ENCODE measurements at regions of chr19 and their contacts with region 1.

Region 1: DNA sequence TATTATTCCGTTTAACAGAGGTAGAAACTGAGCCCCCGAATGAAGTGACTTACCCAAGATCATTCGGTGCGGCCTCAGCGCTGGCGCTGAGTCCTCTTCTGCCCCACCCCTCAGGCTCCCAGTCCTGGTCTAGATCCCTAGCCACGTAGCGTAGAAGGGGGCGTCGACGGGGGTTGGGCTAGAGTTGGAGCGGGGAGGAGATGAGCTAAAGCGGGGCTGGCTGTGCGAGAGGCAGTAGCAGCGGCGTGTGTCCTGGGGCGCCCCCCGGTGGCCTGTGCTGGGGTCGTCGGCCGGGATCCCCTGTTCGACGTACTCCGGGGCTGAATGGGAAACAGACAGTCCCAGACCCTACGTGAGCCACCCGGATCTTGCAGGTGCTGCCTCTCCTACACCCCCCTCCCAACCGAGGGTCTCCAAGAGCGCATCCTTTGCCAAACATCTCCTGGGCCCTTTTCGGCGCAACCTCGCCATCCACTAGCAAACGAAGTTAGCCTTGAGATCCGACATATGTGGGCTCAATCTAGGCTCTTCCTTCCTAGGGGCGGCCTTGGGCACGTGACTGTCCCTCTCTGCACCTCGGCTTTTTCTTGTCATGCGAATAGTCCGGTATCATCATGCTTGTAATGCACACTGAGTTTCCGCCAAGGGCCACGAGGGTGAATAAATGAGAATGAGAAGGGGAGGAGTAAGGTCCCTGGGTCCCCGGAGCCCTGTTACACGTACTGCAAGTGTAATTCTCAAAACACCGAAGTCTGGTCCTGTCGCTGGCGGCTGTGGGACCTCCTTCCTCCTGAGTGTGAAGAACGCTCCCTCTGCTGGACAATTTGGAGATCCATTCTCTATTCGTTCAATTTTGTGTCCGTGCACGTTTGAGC is 47.7 kb downstream of the CYP4F22 start:
- DNase-seq: peak; percentile 87
- ATAC-seq: peak; percentile 93
- H3K4me3 ChIP-seq: peak overlapping the region; percentile 15; the same call in 1 of the 2 replicates
- H3K27ac ChIP-seq: no peak overlapping the region
- H3K4me1 ChIP-seq: no peaks in the 10 kb centered on the region
- H3K27me3 ChIP-seq: no peaks in the 10 kb centered on the region; the same call in 1 of the 2 replicates
- CTCF ChIP-seq: peak; percentile 90
- POLR2A ChIP-seq: no peak
- RAD21 ChIP-seq: peak; percentile 93

Region 2: DNA sequence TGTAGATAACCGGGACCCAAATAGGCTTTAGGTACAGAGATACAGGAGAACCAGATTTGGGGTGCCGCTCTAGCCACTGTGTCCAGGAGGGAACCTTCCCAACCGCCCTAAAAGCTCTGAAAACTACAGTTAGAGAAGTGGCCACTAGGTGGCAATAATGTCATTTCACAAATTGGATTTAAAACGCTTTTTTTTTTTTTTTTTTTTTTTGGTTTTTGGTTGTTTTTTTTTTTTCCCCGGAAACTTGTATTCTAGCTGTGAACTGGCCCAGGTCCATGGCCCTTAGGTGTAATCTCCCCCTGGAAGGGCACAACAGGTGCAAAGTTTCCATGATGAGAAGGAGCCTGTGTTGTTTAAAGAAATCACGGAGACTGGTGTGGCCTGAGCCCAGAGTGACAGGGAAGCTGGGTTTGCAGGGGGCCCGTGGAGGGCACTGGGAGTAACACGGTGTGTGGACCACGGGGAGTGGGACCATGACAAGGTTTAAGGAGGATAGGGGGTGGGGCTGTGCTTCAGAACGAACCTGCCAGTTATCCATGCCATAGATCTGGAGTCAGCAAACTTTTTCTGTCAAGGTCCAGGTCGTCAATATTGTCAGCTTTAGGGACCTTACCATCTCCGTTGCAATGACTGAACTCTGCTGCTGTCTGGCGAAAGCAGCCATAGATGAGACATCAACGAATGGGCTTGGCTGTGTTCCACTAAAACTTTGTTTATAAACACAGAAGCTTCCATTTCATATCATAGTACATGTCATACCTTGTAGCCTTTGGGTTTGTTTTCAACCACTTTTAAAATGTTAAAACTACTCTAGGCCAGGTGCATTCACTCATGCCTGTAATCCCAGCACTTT is 463.9 kb before region 1 on chr19:
- CTCF ChIA-PET with region 1: interaction called, 5 read pairs
- POLR2A ChIA-PET with region 1: no interaction called
- dilution Hi-C with region 1: no loop called
- in situ Hi-C with region 1: loop called (anchors 5 kb)
- intact Hi-C with region 1: loop called (anchors 1 kb)
- DNase-seq: peak; percentile 71
- ATAC-seq: peak; percentile 75
- H3K4me3 ChIP-seq: no peak overlapping the region
- H3K27ac ChIP-seq: no peak overlapping the region
- H3K4me1 ChIP-seq: peaks cover 3% of the 10 kb centered on the region; the same call in 1 of the 2 replicates
- H3K27me3 ChIP-seq: peaks cover 11% of the 10 kb centered on the region
- CTCF ChIP-seq: peak; percentile 79
- POLR2A ChIP-seq: no peak
- RAD21 ChIP-seq: peak; percentile 72

Region 3: GRCh38 chr19:15166700-15167099 is 389.3 kb before region 1 on chr19:
- CTCF ChIA-PET with region 1: no interaction called
- POLR2A ChIA-PET with region 1: no interaction called
- dilution Hi-C with region 1: no loop called
- in situ Hi-C with region 1: loop called (anchors 5 kb)
- intact Hi-C with region 1: no loop called
- DNase-seq: no peak
- ATAC-seq: no peak
- H3K4me3 ChIP-seq: no peak overlapping the region
- H3K27ac ChIP-seq: no peak overlapping the region
- H3K4me1 ChIP-seq: no peaks in the 10 kb centered on the region
- H3K27me3 ChIP-seq: no peaks in the 10 kb centered on the region
- CTCF ChIP-seq: no peak
- POLR2A ChIP-seq: no peak
- RAD21 ChIP-seq: no peak

Region 4: GRCh38 chr19:15379083-15379995 is 176.7 kb before region 1 on chr19 and contains the start of gene AKAP8:
- CTCF ChIA-PET with region 1: interaction called, 4 read pairs
- POLR2A ChIA-PET with region 1: no interaction called
- dilution Hi-C with region 1: no loop called
- in situ Hi-C with region 1: no loop called
- intact Hi-C with region 1: loop called (anchors 2 kb)
- DNase-seq: peak; percentile 98
- ATAC-seq: peak; percentile 89
- H3K4me3 ChIP-seq: peak within 1 kb of the TSS; percentile 92
- H3K27ac ChIP-seq: peak within 1 kb of the TSS; percentile 96
- H3K4me1 ChIP-seq: peaks cover 12% of the 10 kb centered on the region
- H3K27me3 ChIP-seq: no peaks in the 10 kb centered on the region
- CTCF ChIP-seq: no peak
- POLR2A ChIP-seq: peak; percentile 83
- RAD21 ChIP-seq: no peak
- total RNA-seq, gene AKAP8: 12.2 and 16.9 TPM in 2 replicates

Region 5: DNA sequence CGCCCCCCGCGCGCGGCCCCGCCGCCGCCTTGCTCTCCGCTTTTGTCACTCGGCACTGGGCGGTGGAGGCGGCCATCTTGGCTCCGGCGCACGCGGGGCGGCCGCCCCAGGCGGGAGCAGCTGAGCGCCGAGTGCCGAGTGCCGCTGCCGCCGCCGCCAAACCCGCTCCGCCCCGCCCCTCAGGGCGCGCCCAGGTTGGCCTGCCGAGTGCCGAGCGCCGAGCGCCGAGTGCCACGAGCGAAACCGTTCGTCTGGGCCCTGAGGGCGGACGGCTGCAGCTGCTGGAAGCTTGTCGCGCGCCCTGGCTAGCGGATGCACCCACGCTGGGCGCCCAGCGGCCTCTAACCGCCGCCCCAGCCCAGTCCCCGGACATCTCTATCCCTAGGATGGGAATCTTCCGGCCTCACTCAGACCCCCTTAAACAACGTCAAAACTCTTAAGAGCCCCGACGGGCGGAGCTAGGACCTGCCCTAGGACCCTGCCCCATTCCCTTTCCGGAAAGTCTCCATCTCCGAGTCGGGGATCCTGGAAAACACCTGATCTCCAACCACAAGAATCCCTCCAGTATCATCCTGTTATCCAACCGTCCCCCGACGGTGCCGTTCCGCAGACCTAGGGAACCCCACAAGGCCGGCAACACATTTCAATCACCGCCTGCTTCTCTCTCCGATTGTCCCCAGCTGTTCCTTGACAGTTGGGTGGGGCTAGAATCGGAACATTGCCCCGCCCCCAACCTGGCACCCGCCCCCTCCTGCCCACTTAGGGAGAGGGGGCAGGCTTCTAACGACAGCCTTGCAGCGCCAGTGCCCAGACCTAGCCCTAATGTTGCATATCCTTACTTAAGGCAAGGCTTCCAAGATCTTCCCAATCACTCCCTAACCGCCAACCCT is 123.1 kb before region 1 on chr19:
- CTCF ChIA-PET with region 1: interaction called, 3 read pairs
- POLR2A ChIA-PET with region 1: no interaction called
- dilution Hi-C with region 1: no loop called
- in situ Hi-C with region 1: no loop called
- intact Hi-C with region 1: loop called (anchors 5 kb)
- DNase-seq: peak; percentile 87
- ATAC-seq: peak; percentile 94
- H3K4me3 ChIP-seq: peak overlapping the region; percentile 51
- H3K27ac ChIP-seq: peak overlapping the region; percentile 48
- H3K4me1 ChIP-seq: peaks cover 30% of the 10 kb centered on the region
- H3K27me3 ChIP-seq: no peaks in the 10 kb centered on the region
- CTCF ChIP-seq: no peak
- POLR2A ChIP-seq: peak; percentile 61; the same call in 1 of the 2 replicates
- RAD21 ChIP-seq: no peak; the same call in 1 of the 2 replicates

Region 6: DNA sequence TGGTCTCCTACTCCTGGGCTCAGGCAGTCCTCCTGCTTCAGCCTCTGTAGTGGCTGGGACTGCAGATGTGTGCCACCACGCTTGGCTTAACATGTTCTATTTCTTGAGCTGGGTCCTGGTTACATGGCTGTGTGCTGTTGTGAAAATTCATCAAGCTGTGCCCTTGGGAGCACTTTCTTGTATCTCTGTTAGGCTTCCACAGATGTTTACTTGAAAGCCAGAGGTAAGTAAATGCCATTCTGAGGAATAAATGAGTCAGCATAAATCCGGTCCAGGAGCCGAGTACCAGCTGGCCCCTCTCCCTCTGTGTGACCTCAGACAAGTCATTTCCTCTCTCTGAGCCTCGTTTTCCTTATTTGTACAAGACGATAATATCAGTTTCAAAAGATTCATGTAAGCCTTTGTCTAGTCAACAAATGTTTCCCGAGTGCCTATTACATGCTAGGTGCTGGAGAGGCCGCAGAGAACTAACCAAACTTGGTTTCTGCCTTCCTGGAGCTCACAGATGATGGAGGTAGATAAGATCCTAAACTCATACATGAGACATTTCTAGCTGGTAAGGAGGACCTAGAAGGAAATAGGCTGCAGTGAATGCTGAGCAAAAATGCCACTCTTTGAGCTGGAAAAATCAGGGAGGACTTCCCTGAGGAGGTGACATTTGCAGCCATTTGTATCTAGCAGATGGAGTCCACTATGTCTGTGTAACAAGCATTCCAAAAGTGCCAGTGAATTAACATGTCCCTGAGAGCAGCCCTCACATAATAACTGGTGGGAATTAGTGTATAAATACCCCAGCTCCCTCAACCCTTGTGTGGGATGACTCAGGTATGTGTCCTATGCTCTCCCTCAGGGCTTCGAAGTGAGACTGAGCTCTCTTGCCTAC is 88.9 kb before region 1 on chr19:
- CTCF ChIA-PET with region 1: no interaction called
- POLR2A ChIA-PET with region 1: no interaction called
- dilution Hi-C with region 1: no loop called
- in situ Hi-C with region 1: loop called (anchors 5 kb)
- intact Hi-C with region 1: no loop called
- DNase-seq: peak; percentile 43
- ATAC-seq: peak; percentile 37; the same call in 1 of the 2 replicates
- H3K4me3 ChIP-seq: no peak overlapping the region
- H3K27ac ChIP-seq: no peak overlapping the region
- H3K4me1 ChIP-seq: no peaks in the 10 kb centered on the region; the same call in 1 of the 2 replicates
- H3K27me3 ChIP-seq: peaks cover 26% of the 10 kb centered on the region
- CTCF ChIP-seq: no peak
- POLR2A ChIP-seq: no peak
- RAD21 ChIP-seq: no peak